ENCODE measurements at regions of chr14 and their contacts with region 1.

Region 1: GRCh38 chr14:104752735-104753531 is at the start of gene SIVA1:
- DNase-seq: peak; percentile 98
- H3K4me3 ChIP-seq: peak within 1 kb of the TSS; percentile 94
- H3K27ac ChIP-seq: peak within 1 kb of the TSS; percentile 52
- H3K27me3 ChIP-seq: no peaks in the 10 kb centered on the region
- CTCF ChIP-seq: no peak
- polyA plus RNA-seq, gene SIVA1: 49.7 and 75.3 TPM in 2 replicates

Region 2: DNA sequence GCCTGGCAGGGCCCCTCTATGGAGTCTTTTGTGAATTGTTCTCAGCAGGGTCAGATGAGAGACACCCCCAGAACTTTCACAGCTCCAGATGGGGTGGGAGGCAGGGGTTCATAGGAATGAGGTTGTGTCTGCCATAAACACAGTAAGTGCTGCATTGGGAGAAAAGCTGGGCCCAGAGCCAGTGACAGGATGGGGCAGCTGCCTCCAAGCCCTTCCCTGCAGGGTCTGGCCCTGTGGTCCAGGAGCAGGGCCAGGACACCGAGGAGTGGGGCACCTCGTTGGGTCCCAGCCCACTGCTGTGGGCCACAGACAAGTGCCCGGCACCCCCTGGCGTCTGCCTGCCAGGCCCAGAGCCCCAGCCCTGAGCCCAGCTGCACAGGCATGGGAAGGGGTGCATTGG is 50.3 kb before region 1 on chr14:
- CTCF ChIA-PET with region 1: no interaction called
- POLR2A ChIA-PET with region 1: no interaction called
- DNase-seq: no peak
- H3K4me3 ChIP-seq: no peak overlapping the region
- H3K27ac ChIP-seq: no peak overlapping the region
- H3K27me3 ChIP-seq: no peaks in the 10 kb centered on the region
- CTCF ChIP-seq: no peak

Region 3: DNA sequence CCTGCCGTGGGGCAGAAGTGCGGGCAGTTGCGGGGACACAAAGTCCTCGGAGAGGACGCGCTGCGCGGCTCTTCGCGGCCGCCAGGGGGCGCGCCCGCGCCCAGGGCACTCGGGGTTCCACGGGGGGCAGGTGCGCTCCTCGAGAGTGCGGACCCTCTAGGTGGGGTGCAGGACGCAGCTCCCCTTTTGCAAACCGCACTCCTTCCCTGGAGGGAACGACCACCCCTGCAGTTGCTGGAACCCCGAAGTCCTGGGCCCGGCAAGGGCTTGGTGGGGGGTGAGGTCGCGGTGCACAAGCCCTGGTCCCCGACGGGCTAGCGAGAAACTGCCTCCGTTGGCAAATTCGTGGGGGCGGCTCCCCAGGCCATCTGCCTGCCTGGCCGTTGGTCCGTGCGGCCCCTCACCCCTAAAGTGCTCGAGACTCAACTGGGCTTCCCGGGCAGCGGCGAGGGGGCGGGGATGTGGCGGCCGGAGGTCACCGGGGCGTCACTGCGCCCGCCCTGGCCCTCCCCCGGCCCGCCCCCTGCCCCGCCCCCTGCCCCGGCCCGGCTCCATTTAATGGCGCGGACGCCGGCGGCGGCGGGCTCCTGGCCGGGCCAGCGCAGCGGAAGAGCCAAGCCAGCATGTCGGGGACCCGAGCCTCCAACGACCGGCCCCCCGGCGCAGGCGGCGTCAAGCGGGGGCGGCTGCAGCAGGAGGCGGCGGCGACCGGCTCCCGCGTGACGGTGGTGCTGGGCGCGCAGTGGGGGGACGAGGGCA is 29.1 kb before region 1 on chr14 and contains the start of gene ADSS1:
- CTCF ChIA-PET with region 1: interaction called, 11 read pairs
- POLR2A ChIA-PET with region 1: interaction called, 16 read pairs
- DNase-seq: no peak
- H3K4me3 ChIP-seq: peak within 1 kb of the TSS; percentile 58
- H3K27ac ChIP-seq: no peak within 1 kb of the TSS
- H3K27me3 ChIP-seq: peaks cover 6% of the 10 kb centered on the region
- CTCF ChIP-seq: peak; percentile 74
- polyA plus RNA-seq, gene ADSS1: 2.8 and 4.2 TPM in 2 replicates

Measured in AG04450 (cell line).